Naive thymus-derived CD4-positive, alpha-beta T cell (primary cell): ENCODE measurements at regions of chr3 and their contacts with region 1.

Region 1: DNA sequence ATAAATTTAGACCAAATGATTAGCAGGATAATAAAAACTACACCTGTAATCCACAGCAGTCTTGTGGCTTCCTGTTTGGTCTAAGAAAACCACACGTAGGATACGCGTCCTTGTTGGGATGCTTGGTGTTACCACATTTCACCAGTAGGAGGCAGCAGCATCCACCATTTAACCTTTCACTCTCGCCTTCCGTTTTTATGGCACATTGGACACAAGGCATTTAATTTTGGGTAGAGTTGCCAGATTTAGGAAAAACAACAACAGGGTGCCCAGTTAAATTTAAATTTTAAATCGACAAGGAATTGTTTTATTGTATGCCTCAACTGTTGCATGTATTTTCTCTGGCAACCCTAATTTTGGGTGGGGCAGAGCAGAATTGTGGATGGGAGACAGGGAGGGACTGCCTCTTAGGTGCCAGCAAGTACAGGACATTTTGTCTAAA is 6.3 kb downstream of the LRRC31 start:
- DNase-seq: peak; percentile 29 to 77 (median 67)
- ATAC-seq: peak; percentile 87
- H3K4me3 ChIP-seq: no peak overlapping the region
- H3K4me3 Mint-ChIP-seq: peak overlapping the region in 4 of 10 donors; percentile 3 to 58 (median 38)
- H3K27ac ChIP-seq: no peak overlapping the region
- H3K27ac Mint-ChIP-seq: peak overlapping the region in 6 of 9 donors; percentile 42 to 98 (median 52)
- H3K4me1 ChIP-seq: peaks cover 6 to 22% of the 10 kb centered on the region in 2 donors
- H3K4me1 Mint-ChIP-seq: peaks cover 19 to 38% (median 27%) of the 10 kb centered on the region in 7 donors
- H3K27me3 ChIP-seq: no peaks in the 10 kb centered on the region
- H3K27me3 Mint-ChIP-seq: peaks cover 0 to 14% (median 0%) of the 10 kb centered on the region in 5 donors

Region 2: GRCh38 chr3:169812332-169813235 is 50.9 kb before region 1 on chr3 and contains the starts of genes LRRC34 and LRRIQ4:
- CTCF ChIA-PET with region 1: interaction called, 3 read pairs
- POLR2A ChIA-PET with region 1: no interaction called
- intact Hi-C with region 1: loop called in 1 of 2 experiments (anchors 5 kb)
- DNase-seq: peak; percentile 43 to 72 (median 52)
- ATAC-seq: peak; percentile 72
- H3K4me3 ChIP-seq: peak within 1 kb of the TSS; percentile 85
- H3K4me3 Mint-ChIP-seq: peak within 1 kb of the TSS; percentile 79 to 91 (median 86)
- H3K27ac ChIP-seq: peak within 1 kb of the TSS; percentile 59
- H3K27ac Mint-ChIP-seq: peak within 1 kb of the TSS; percentile 3 to 92 (median 71)
- H3K4me1 ChIP-seq: peaks cover 4 to 6% of the 10 kb centered on the region in 2 donors
- H3K4me1 Mint-ChIP-seq: peaks cover 21 to 40% (median 25%) of the 10 kb centered on the region in 7 donors
- H3K27me3 ChIP-seq: no peaks in the 10 kb centered on the region
- H3K27me3 Mint-ChIP-seq: peaks cover 0 to 18% (median 2%) of the 10 kb centered on the region in 5 donors
- total RNA-seq, gene LRRC34: 0.30 to 3.7 (median 0.42) TPM
- total RNA-seq, gene LRRIQ4: 0.12 TPM in 1 of 5 experiments, not detected in the others

Region 3: GRCh38 chr3:169980055-169980454 is 116.6 kb after region 1 on chr3:
- CTCF ChIA-PET with region 1: interaction called, 4 read pairs
- POLR2A ChIA-PET with region 1: interaction called, 3 read pairs
- intact Hi-C with region 1: loop called in 1 of 2 experiments (anchors 5 kb)
- DNase-seq: no peak
- ATAC-seq: no peak
- H3K4me3 ChIP-seq: no peak overlapping the region
- H3K4me3 Mint-ChIP-seq: no peak overlapping the region
- H3K27ac ChIP-seq: no peak overlapping the region
- H3K27ac Mint-ChIP-seq: peak overlapping the region in 6 of 9 donors; percentile 1 to 51 (median 10)
- H3K4me1 ChIP-seq: peaks cover 0 to 4% of the 10 kb centered on the region in 2 donors
- H3K4me1 Mint-ChIP-seq: peaks cover 4 to 26% (median 17%) of the 10 kb centered on the region in 7 donors
- H3K27me3 ChIP-seq: no peaks in the 10 kb centered on the region
- H3K27me3 Mint-ChIP-seq: no peaks in the 10 kb centered on the region

Region 4: GRCh38 chr3:170055209-170055608 is 191.7 kb after region 1 on chr3:
- CTCF ChIA-PET with region 1: interaction called, 12 read pairs
- POLR2A ChIA-PET with region 1: interaction called, 8 read pairs
- intact Hi-C with region 1: loop called (anchors 1 kb)
- DNase-seq: no peak
- ATAC-seq: no peak
- H3K4me3 ChIP-seq: no peak overlapping the region
- H3K4me3 Mint-ChIP-seq: no peak overlapping the region
- H3K27ac ChIP-seq: no peak overlapping the region
- H3K27ac Mint-ChIP-seq: peak overlapping the region in 2 of 9 donors; percentile 29 to 42
- H3K4me1 ChIP-seq: peaks cover 0 to 7% of the 10 kb centered on the region in 2 donors
- H3K4me1 Mint-ChIP-seq: peaks cover 6 to 37% (median 23%) of the 10 kb centered on the region in 7 donors
- H3K27me3 ChIP-seq: no peaks in the 10 kb centered on the region
- H3K27me3 Mint-ChIP-seq: no peaks in the 10 kb centered on the region

Region 5: DNA sequence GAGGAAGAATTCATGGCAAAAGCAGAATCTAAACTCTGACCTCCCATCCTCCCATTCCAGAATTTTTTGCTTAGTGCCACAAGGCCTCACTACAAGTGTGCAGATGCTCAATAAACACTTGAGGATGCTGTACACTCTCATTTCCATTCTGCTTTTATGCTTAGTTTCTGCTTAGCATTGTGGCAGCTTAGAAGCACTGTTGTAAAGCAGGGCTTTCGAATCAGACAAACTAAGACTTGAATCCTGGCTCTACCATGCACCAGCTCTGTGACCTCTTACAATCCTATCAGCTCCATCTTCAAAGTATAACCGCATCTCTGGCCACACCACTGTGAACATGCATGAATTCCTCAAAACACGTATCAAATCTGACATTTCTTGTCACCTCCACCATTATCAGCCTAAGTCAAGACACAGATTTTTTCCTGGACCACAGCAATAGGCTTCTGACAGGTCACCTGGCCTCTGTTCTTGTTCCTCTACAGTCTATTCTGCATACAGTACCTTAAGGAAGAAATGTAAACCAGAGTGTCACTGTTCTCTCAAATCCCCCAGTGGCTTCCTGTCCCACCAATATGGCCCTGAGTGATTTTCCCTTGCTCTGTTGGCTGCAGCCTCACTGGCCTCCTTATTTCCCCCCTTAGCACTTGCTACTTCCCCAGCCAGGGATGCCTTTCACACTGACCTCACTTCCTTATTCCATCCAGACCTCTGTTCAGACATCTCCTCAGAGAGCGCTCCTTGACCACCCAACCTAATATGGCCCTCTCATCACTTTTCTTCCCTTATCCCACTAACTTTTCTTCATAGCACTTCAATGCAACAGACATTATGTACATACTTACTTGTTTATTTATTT is 326.1 kb after region 1 on chr3:
- CTCF ChIA-PET with region 1: no interaction called
- POLR2A ChIA-PET with region 1: no interaction called
- intact Hi-C with region 1: loop called (anchors 1 to 2 kb)
- DNase-seq: no peak
- ATAC-seq: peak; percentile 28
- H3K4me3 ChIP-seq: no peak overlapping the region
- H3K4me3 Mint-ChIP-seq: peak overlapping the region in 5 of 10 donors; percentile 10 to 37 (median 23)
- H3K27ac ChIP-seq: no peak overlapping the region
- H3K27ac Mint-ChIP-seq: peak overlapping the region in 2 of 9 donors; percentile 14 to 51
- H3K4me1 ChIP-seq: peaks cover 0 to 4% of the 10 kb centered on the region in 2 donors
- H3K4me1 Mint-ChIP-seq: peaks cover 0 to 14% (median 12%) of the 10 kb centered on the region in 7 donors
- H3K27me3 ChIP-seq: no peaks in the 10 kb centered on the region
- H3K27me3 Mint-ChIP-seq: peaks cover 0 to 21% (median 4%) of the 10 kb centered on the region in 5 donors

Region 6: GRCh38 chr3:170908235-170909116 is 1045.0 kb after region 1 on chr3 and contains the start of gene EIF5A2:
- CTCF ChIA-PET with region 1: interaction called, 8 read pairs
- POLR2A ChIA-PET with region 1: no interaction called
- intact Hi-C with region 1: loop called in 1 of 2 experiments (anchors 5 kb)
- DNase-seq: peak; percentile 87 to 97 (median 94)
- ATAC-seq: peak; percentile 98
- H3K4me3 ChIP-seq: peak within 1 kb of the TSS; percentile 50
- H3K4me3 Mint-ChIP-seq: peak within 1 kb of the TSS; percentile 90 to 98 (median 96)
- H3K27ac ChIP-seq: peak within 1 kb of the TSS; percentile 68
- H3K27ac Mint-ChIP-seq: peak within 1 kb of the TSS; percentile 89 to 96 (median 94)
- H3K4me1 ChIP-seq: peaks cover 15 to 16% of the 10 kb centered on the region in 2 donors
- H3K4me1 Mint-ChIP-seq: peaks cover 0 to 31% (median 22%) of the 10 kb centered on the region in 7 donors
- H3K27me3 ChIP-seq: no peaks in the 10 kb centered on the region
- H3K27me3 Mint-ChIP-seq: peaks cover 0 to 19% (median 0%) of the 10 kb centered on the region in 5 donors
- total RNA-seq, gene EIF5A2: 5.5 to 9.8 (median 7.4) TPM

Region 7: DNA sequence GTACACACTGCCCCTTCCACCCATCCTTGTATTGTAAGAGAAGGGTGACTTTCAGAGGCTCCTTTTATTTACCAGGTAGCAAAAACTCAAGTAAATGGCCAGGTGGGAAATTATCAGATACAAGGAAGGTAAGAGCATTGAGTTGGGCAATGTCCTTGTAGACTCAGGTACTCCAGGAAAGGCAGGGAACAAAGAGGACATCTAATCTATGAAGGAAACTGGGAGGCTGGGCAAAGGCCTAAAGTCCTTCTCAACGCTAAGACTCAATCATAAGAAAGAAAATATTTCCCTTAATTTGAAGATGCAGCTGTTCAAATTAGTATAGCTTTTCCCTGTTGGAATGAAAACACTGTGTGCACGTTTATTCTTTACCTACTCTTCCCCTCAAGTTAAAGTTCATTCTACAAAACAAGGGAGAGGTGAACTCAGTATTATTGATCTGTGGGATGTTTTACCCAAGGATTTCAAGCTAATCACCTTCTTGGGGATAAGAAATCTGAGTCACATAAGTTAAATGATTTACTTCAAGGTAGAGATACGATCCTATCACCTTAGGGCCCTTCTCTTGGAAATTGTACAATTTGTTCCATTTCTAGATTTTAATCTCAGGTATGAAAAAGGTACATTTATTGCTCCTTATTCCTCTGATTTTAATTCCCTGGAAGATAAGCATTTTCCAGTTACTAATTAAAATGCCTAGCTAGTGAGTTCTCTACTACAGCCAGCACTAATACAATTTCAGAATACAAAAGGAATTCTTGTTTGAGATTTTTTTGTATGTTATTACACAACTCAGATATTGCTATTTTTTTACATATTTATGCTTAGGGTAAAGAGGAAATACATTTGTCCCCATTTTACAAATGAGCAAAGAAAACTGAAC is 1866.2 kb after region 1 on chr3:
- CTCF ChIA-PET with region 1: no interaction called
- POLR2A ChIA-PET with region 1: no interaction called
- intact Hi-C with region 1: no loop called
- DNase-seq: no peak
- ATAC-seq: no peak
- H3K4me3 ChIP-seq: no peak overlapping the region
- H3K4me3 Mint-ChIP-seq: no peak overlapping the region
- H3K27ac ChIP-seq: no peak overlapping the region
- H3K27ac Mint-ChIP-seq: no peak overlapping the region
- H3K4me1 ChIP-seq: no peaks in the 10 kb centered on the region
- H3K4me1 Mint-ChIP-seq: no peaks in the 10 kb centered on the region
- H3K27me3 ChIP-seq: no peaks in the 10 kb centered on the region
- H3K27me3 Mint-ChIP-seq: peaks cover 0 to 12% (median 6%) of the 10 kb centered on the region in 5 donors